Activated CD8-positive, alpha-beta memory T cell treated with anti-CD3 and anti-CD28 coated beads, Interleukin-2, amount 10 ng/mL, durations not matched to agents 7 days and 5 days (primary cell): ENCODE measurements at regions of chr12 and their contacts with region 1.

Region 1: DNA sequence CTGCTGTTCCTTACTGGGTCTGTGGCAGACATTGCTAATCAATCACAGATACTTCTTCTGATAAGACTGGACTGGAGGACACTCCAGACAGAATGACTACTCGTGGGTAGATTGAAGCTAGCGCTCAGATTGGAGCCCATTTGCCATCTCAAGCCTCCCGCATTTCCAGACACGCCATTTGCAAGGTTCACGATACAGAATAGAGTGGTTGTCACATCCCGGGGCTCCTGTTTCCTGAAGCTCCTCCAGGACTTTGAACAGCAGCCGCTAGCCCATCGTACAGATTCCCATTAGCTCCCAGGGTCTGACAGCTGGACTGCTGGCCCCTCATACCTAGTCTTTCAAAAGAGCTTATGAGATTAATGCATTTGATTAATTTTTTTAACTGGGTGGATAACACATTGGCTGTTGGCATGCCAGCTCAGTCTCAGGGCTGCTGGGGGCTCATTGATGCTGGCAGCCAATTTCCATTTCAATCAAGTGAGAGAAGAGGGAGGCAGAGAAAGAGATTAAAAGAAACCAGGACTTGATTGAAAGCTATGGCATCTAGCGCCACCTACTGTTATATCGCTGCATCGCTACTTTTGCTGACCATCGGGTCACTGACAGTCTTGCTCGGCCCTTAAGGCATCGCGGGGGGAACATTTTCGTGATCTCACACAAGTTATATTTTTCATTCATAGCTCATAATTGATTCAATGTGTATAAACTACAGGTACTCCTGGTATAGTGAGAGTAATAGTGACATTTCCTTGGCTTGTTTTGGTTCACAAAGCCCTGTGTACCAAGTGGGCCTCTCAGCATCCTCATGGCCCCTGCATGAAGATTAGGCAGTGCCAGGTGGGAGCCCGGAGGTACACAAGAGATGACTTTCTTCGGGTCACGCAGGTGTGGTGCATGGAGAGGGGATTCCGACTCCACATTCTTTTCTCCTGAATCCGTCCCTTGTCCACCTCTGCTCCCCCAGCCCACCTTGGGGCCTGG is 78.6 kb downstream of the CCDC60 start:
- DNase-seq: peak; percentile 65
- ATAC-seq: no peak
- H3K4me3 Mint-ChIP-seq: no peak overlapping the region
- H3K27ac Mint-ChIP-seq: no peak overlapping the region
- H3K4me1 Mint-ChIP-seq: no peaks in the 10 kb centered on the region
- H3K27me3 Mint-ChIP-seq: peaks cover 7% of the 10 kb centered on the region

Region 2: DNA sequence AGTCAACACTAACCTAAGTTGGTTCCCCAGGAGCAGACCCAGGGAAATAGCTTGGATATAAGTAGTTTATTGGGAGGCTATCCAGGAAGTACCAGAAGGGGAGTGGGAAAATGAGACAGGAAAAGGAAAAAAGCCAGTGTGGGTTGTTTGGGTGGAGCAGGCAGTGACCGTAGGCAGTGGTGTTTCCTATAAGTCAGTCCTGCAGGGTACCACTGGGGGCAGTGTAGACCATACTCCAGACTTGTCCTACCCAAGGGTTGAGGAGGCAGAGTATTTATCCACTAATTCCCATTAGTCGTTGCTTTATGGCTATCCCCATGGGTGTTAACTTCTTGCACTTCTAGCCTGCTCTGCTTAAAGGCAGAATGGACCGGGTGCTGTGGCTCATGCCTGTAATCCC is 85.0 kb before region 1 on chr12:
- CTCF ChIA-PET with region 1: interaction called, 10 read pairs
- DNase-seq: no peak
- ATAC-seq: no peak
- H3K4me3 Mint-ChIP-seq: no peak overlapping the region
- H3K27ac Mint-ChIP-seq: no peak overlapping the region
- H3K4me1 Mint-ChIP-seq: no peaks in the 10 kb centered on the region
- H3K27me3 Mint-ChIP-seq: peaks cover 2% of the 10 kb centered on the region

Region 3: GRCh38 chr12:119431151-119431550 is 18.0 kb after region 1 on chr12:
- CTCF ChIA-PET with region 1: no interaction called
- DNase-seq: no peak
- ATAC-seq: no peak
- H3K4me3 Mint-ChIP-seq: no peak overlapping the region
- H3K27ac Mint-ChIP-seq: no peak overlapping the region
- H3K4me1 Mint-ChIP-seq: no peaks in the 10 kb centered on the region
- H3K27me3 Mint-ChIP-seq: no peaks in the 10 kb centered on the region